Naive thymus-derived CD4-positive, alpha-beta T cell (primary cell): ENCODE measurements at regions of chr19 and their contacts with region 1.

Region 1: DNA sequence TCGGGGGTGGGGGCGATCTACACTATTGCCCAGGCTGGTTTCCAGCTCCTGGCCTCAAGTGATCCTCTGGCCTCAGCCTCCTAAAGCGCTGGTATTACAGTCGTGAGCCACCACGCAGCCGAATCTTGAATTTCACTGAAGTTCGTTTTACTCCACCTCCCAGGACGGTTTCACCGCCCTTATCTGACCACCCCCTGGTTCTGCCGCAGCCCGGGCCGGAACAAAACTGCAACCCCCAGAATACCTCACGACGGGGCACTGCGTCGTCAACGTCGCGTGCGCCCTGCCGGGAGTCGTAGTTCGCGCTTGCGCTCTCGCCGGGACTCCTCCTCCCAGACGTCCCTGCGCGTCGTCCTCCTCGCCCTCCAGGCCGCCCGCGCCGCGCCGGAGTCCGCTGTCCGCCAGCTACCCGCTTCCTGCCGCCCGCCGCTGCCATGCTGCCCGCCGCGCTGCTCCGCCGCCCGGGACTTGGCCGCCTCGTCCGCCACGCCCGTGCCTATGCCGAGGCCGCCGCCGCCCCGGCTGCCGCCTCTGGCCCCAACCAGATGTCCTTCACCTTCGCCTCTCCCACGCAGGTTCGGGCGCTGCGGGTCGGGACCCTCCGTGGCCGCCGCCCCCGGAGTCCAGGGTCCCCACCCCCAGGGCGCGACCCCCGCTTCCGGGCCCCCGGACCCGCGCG is at the start of gene ATP5F1D:
- DNase-seq: peak; percentile 76 to 91 (median 85)
- ATAC-seq: peak; percentile 74
- H3K4me3 ChIP-seq: peak within 1 kb of the TSS; percentile 57
- H3K4me3 Mint-ChIP-seq: peak within 1 kb of the TSS; percentile 86 to 96 (median 90)
- H3K27ac ChIP-seq: peak within 1 kb of the TSS; percentile 82
- H3K27ac Mint-ChIP-seq: peak within 1 kb of the TSS; percentile 81 to 96 (median 93)
- H3K4me1 ChIP-seq: peaks cover 29 to 33% of the 10 kb centered on the region in 2 donors
- H3K4me1 Mint-ChIP-seq: peaks cover 16 to 47% (median 25%) of the 10 kb centered on the region in 7 donors
- H3K27me3 ChIP-seq: no peaks in the 10 kb centered on the region
- H3K27me3 Mint-ChIP-seq: peaks cover 4 to 18% (median 9%) of the 10 kb centered on the region in 5 donors
- total RNA-seq, gene ATP5F1D: 90.6 to 178 (median 102) TPM

Region 2: DNA sequence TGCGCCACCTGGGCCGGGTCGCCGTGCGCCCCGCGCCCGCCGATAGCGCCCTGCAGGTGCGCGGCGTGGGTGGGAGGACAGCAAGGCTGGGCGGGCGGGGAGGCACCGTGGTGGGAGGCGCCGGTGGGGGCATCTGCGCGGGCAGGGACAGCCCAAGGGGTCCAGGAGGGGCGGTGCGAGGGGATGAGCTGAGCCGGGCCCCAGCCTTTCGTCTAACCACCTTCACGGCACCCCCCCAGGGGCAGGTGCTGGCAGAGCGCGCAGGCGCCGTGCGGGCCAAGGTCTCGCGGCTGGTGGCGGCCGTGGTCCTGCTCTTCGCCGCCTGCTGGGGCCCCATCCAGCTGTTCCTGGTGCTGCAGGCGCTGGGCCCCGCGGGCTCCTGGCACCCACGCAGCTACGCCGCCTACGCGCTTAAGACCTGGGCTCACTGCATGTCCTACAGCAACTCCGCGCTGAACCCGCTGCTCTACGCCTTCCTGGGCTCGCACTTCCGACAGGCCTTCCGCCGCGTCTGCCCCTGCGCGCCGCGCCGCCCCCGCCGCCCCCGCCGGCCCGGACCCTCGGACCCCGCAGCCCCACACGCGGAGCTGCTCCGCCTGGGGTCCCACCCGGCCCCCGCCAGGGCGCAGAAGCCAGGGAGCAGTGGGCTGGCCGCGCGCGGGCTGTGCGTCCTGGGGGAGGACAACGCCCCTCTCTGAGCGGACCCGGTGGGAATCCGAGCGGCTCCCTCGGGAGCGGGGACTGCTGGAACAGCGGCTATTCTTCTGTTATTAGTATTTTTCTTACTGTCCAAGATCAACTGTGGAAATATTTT is 321.3 kb before region 1 on chr19:
- CTCF ChIA-PET with region 1: no interaction called
- POLR2A ChIA-PET with region 1: no interaction called
- intact Hi-C with region 1: loop called (anchors 1 to 2 kb)
- DNase-seq: peak; percentile 61 to 77 (median 76)
- ATAC-seq: peak; percentile 70
- H3K4me3 ChIP-seq: peak overlapping the region; percentile 21
- H3K4me3 Mint-ChIP-seq: peak overlapping the region; percentile 74 to 91 (median 85)
- H3K27ac ChIP-seq: peak overlapping the region; percentile 64
- H3K27ac Mint-ChIP-seq: peak overlapping the region in 8 of 9 donors; percentile 51 to 97 (median 80)
- H3K4me1 ChIP-seq: peaks cover 9 to 15% of the 10 kb centered on the region in 2 donors
- H3K4me1 Mint-ChIP-seq: peaks cover 5 to 26% (median 18%) of the 10 kb centered on the region in 7 donors
- H3K27me3 ChIP-seq: no peaks in the 10 kb centered on the region
- H3K27me3 Mint-ChIP-seq: peaks cover 0 to 5% (median 0%) of the 10 kb centered on the region in 5 donors

Region 3: GRCh38 chr19:1094975-1095701 is 146.4 kb before region 1 on chr19 and contains the start of gene POLR2E:
- CTCF ChIA-PET with region 1: interaction called, 5 read pairs
- POLR2A ChIA-PET with region 1: no interaction called
- intact Hi-C with region 1: loop called in 1 of 2 experiments (anchors 1 kb)
- DNase-seq: peak; percentile 97 to 99 (median 99)
- ATAC-seq: peak; percentile 98
- H3K4me3 ChIP-seq: peak within 1 kb of the TSS; percentile 68
- H3K4me3 Mint-ChIP-seq: peak within 1 kb of the TSS; percentile 80 to 97 (median 92)
- H3K27ac ChIP-seq: peak within 1 kb of the TSS; percentile 71
- H3K27ac Mint-ChIP-seq: peak within 1 kb of the TSS; percentile 87 to 97 (median 93)
- H3K4me1 ChIP-seq: peaks cover 18 to 23% of the 10 kb centered on the region in 2 donors
- H3K4me1 Mint-ChIP-seq: peaks cover 10 to 59% (median 44%) of the 10 kb centered on the region in 7 donors
- H3K27me3 ChIP-seq: no peaks in the 10 kb centered on the region
- H3K27me3 Mint-ChIP-seq: no peaks in the 10 kb centered on the region
- total RNA-seq, gene POLR2E: 75.3 to 157 (median 82.1) TPM

Region 4: DNA sequence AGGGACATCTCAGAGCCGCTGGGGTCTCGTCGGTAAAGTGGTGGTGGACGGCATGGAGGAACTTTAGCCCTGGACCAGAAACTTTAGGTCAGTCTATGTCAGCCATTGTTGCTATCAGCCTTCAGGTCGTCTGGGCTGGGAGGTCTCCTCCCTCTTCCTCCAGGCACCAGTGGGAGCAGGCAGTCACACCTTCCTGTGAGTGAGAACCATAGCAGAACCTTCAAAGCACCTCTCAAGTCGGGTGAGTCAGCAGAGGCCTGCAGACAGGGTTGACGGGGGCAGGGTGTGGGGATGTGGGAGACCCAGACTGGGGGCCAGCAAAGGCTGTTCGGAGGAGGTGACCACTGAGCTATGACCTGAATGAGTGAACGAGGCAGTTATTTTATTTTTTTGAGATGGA is 52.1 kb before region 1 on chr19:
- CTCF ChIA-PET with region 1: interaction called, 5 read pairs
- POLR2A ChIA-PET with region 1: interaction called, 3 read pairs
- intact Hi-C with region 1: loop called in 1 of 2 experiments (anchors 5 kb)
- DNase-seq: peak in 1 of 9 donors; percentile 67
- ATAC-seq: peak; percentile 57
- H3K4me3 ChIP-seq: no peak overlapping the region
- H3K4me3 Mint-ChIP-seq: peak overlapping the region in 5 of 10 donors; percentile 33 to 63 (median 58)
- H3K27ac ChIP-seq: no peak overlapping the region
- H3K27ac Mint-ChIP-seq: peak overlapping the region; percentile 44 to 94 (median 79)
- H3K4me1 ChIP-seq: peaks cover 21 to 25% of the 10 kb centered on the region in 2 donors
- H3K4me1 Mint-ChIP-seq: peaks cover 11 to 27% (median 18%) of the 10 kb centered on the region in 7 donors
- H3K27me3 ChIP-seq: no peaks in the 10 kb centered on the region
- H3K27me3 Mint-ChIP-seq: no peaks in the 10 kb centered on the region

Region 5: GRCh38 chr19:1260636-1261537 is 19.3 kb after region 1 on chr19:
- CTCF ChIA-PET with region 1: interaction called, 164 read pairs
- POLR2A ChIA-PET with region 1: interaction called, 366 read pairs
- intact Hi-C with region 1: loop called (anchors 1 kb)
- DNase-seq: peak; percentile 95 to 98 (median 96)
- ATAC-seq: peak; percentile 91
- H3K4me3 ChIP-seq: peak overlapping the region; percentile 95
- H3K4me3 Mint-ChIP-seq: peak overlapping the region; percentile 83 to 93 (median 88)
- H3K27ac ChIP-seq: peak overlapping the region; percentile 99
- H3K27ac Mint-ChIP-seq: peak overlapping the region; percentile 88 to 98 (median 96)
- H3K4me1 ChIP-seq: peaks cover 46 to 49% of the 10 kb centered on the region in 2 donors
- H3K4me1 Mint-ChIP-seq: peaks cover 34 to 65% (median 54%) of the 10 kb centered on the region in 7 donors
- H3K27me3 ChIP-seq: no peaks in the 10 kb centered on the region
- H3K27me3 Mint-ChIP-seq: no peaks in the 10 kb centered on the region

Region 6: DNA sequence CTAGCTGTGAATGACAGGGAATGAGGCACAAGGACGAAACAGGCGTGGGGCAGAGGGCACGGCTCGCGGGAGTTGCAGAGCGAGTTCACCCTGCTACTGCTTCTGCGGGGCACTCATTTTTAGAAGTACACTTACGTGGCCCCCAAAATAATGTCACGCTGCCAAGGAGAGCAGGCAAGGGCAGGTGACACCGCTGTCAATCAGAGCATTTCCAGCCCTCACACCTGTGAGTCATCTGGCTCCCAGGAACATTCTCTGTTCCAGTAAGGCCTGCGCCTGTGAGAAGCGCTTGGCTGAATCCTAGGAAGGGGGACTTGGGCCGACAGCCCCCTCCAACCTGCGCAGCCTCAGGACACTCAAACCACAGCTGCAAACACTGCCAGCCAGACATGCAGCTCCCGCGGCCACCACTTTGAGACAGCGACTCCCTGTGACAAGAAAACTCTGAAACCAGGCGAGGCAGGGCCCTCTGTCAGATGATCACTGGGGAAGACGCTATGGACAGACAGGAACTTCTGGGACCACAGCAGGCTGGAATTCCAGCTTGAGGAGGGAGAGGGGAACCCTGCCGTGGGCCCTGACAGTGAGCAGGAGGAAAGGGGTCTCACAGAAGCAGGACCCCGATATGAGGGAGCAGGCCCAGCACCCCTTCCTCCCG is 934.9 kb after region 1 on chr19:
- CTCF ChIA-PET with region 1: no interaction called
- POLR2A ChIA-PET with region 1: no interaction called
- intact Hi-C with region 1: no loop called
- DNase-seq: no peak
- ATAC-seq: no peak
- H3K4me3 ChIP-seq: no peak overlapping the region
- H3K4me3 Mint-ChIP-seq: no peak overlapping the region
- H3K27ac ChIP-seq: no peak overlapping the region
- H3K27ac Mint-ChIP-seq: no peak overlapping the region
- H3K4me1 ChIP-seq: peaks cover 0 to 4% of the 10 kb centered on the region in 2 donors
- H3K4me1 Mint-ChIP-seq: peaks cover 3 to 41% (median 17%) of the 10 kb centered on the region in 7 donors
- H3K27me3 ChIP-seq: no peaks in the 10 kb centered on the region
- H3K27me3 Mint-ChIP-seq: no peaks in the 10 kb centered on the region